B cell (primary cell): ENCODE measurements at regions of chr1 and their contacts with region 1.

Region 1: GRCh38 chr1:2575801-2576663 is 10.5 kb upstream of the PRXL2B start:
- DNase-seq: peak; percentile 66
- ATAC-seq: no peak
- H3K4me3 ChIP-seq: peak overlapping the region in 2 of 5 experiments; percentile 46 to 59
- H3K4me3 Mint-ChIP-seq: peak overlapping the region; percentile 83
- H3K27ac ChIP-seq: peak overlapping the region; percentile 21 to 100
- H3K27ac Mint-ChIP-seq: peak overlapping the region; percentile 98
- H3K4me1 ChIP-seq: peaks cover 46 to 59% of the 10 kb centered on the region in 2 donors
- H3K4me1 Mint-ChIP-seq: peaks cover 61% of the 10 kb centered on the region
- H3K27me3 ChIP-seq: no peaks in the 10 kb centered on the region
- H3K27me3 Mint-ChIP-seq: no peaks in the 10 kb centered on the region
- CTCF ChIP-seq: no peak

Region 2: GRCh38 chr1:2259668-2260402 is 316.2 kb before region 1 on chr1:
- CTCF ChIA-PET with region 1: no interaction called
- POLR2A ChIA-PET with region 1: no interaction called
- intact Hi-C with region 1: no loop called
- DNase-seq: no peak
- ATAC-seq: no peak
- H3K4me3 ChIP-seq: no peak overlapping the region
- H3K4me3 Mint-ChIP-seq: peak overlapping the region; percentile 69
- H3K27ac ChIP-seq: peak overlapping the region in 1 of 2 donors; percentile 83
- H3K27ac Mint-ChIP-seq: peak overlapping the region; percentile 75
- H3K4me1 ChIP-seq: peaks cover 54 to 66% of the 10 kb centered on the region in 2 donors
- H3K4me1 Mint-ChIP-seq: peaks cover 52% of the 10 kb centered on the region
- H3K27me3 ChIP-seq: no peaks in the 10 kb centered on the region
- H3K27me3 Mint-ChIP-seq: no peaks in the 10 kb centered on the region
- CTCF ChIP-seq: no peak

Region 3: DNA sequence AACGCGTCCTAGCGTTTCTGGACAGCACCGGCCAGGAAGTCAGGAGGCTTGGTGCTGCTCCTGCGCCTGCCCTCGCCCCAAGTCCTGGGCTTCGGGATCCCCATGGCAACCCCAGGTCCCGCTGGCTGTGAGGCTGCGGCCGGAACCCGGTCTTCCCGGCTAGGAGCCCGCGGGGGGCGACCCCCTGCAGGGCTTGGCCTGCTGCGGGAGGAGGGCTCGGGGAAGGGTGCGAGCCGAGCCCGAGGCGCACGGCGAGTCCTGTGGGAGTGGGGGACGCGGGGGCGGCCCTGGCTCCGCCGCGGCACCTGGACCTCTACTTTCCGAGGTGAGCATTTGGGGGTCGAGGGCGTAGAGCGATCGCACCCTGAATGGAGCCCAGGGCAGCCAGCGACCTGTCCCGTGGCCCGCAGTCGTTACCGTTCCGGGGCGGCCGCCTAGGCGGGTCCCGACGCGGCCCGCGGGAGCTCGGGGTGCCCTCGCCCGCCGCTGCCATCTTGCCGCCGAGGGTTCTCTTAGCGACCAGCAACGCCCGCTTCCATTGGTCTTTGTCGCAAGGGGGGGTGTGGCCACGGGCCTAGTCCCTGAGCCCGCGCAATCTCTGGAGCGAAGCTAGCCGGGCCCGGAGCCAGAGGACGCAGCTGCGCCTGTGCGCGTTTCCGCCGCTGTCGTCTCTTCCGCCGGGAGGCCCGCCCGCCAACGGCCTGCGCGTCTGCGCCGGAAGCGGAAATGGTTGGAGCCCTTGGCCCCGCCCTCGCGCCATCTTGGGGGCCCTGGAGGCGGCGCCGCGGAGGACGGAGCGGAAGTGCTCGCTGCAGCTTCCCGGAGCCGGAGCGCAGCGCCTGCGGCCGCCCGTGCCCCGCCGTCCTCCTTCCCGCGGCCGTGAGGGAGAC is 184.7 kb before region 1 on chr1 and contains the starts of genes MORN1 and RER1:
- CTCF ChIA-PET with region 1: no interaction called
- POLR2A ChIA-PET with region 1: no interaction called
- intact Hi-C with region 1: loop called (anchors 1 kb)
- DNase-seq: peak; percentile 99
- ATAC-seq: peak; percentile 94
- H3K4me3 ChIP-seq: peak within 1 kb of the TSS; percentile 61 to 92 (median 76)
- H3K4me3 Mint-ChIP-seq: peak within 1 kb of the TSS; percentile 92
- H3K27ac ChIP-seq: peak within 1 kb of the TSS; percentile 24 to 88
- H3K27ac Mint-ChIP-seq: peak within 1 kb of the TSS; percentile 88
- H3K4me1 ChIP-seq: peaks cover 25 to 47% of the 10 kb centered on the region in 2 donors
- H3K4me1 Mint-ChIP-seq: peaks cover 47% of the 10 kb centered on the region
- H3K27me3 ChIP-seq: no peaks in the 10 kb centered on the region
- H3K27me3 Mint-ChIP-seq: no peaks in the 10 kb centered on the region
- CTCF ChIP-seq: no peak
- total RNA-seq, gene MORN1: 30.4 and 32.6 TPM in 2 replicates
- total RNA-seq, gene RER1: 117 and 118 TPM in 2 replicates

Region 4: DNA sequence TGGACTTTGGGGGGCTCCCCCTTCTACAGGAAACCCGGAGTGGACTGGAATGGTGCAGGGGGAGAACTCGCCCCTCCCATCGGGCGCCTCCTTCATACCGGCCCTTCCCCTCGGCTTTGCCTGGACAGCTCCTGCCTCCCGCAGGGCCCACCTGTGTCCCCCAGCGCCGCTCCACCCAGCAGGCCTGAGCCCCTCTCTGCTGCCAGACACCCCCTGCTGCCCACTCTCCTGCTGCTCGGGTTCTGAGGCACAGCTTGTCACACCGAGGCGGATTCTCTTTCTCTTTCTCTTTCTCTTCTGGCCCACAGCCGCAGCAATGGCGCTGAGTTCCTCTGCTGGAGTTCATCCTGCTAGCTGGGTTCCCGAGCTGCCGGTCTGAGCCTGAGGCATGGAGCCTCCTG is 19.8 kb before region 1 on chr1 and contains the start of gene TNFRSF14:
- CTCF ChIA-PET with region 1: interaction called, 33 read pairs
- POLR2A ChIA-PET with region 1: interaction called, 33 read pairs
- intact Hi-C with region 1: loop called (anchors 1 kb)
- DNase-seq: peak; percentile 88
- ATAC-seq: peak; percentile 61
- H3K4me3 ChIP-seq: peak within 1 kb of the TSS; percentile 82 to 91 (median 85)
- H3K4me3 Mint-ChIP-seq: peak within 1 kb of the TSS; percentile 95
- H3K27ac ChIP-seq: peak within 1 kb of the TSS; percentile 87 to 99
- H3K27ac Mint-ChIP-seq: peak within 1 kb of the TSS; percentile 97
- H3K4me1 ChIP-seq: peaks cover 31 to 43% of the 10 kb centered on the region in 2 donors
- H3K4me1 Mint-ChIP-seq: peaks cover 48% of the 10 kb centered on the region
- H3K27me3 ChIP-seq: no peaks in the 10 kb centered on the region
- H3K27me3 Mint-ChIP-seq: no peaks in the 10 kb centered on the region
- CTCF ChIP-seq: peak; percentile 36
- total RNA-seq, gene TNFRSF14: 239 and 243 TPM in 2 replicates

Region 5: DNA sequence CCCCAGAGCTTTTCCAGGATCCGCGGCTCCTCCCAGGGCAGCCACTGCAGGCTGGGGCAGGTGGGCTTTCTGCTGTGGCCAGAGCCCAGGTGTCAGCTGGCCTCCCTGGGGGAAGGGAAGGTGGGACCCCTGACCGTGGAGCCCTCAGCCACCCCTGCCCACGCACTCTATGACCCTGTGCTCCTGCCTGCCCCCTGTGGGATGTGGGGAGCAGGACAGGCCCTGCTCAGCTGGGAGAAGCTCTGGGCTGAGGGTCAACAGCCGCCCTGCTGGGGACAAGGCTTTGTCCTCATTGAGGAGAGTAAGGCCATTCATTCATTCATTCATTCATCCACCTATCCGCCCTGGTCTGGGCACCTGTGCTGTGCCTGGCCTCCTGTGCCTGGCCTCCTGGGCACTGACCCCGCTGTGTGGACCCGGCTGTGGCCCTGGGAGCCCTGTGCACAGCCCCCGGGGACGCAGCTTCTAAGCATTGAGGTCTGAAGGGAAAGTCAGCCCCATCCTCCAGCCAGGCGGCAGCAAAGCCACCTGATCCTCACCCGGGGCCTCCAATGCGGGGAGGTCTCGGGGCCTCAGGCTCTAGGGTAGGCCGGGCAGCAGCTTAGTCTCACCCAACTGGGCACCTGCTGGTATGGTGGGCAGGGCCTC is 14.0 kb before region 1 on chr1:
- CTCF ChIA-PET with region 1: interaction called, 33 read pairs
- POLR2A ChIA-PET with region 1: interaction called, 33 read pairs
- intact Hi-C with region 1: no loop called
- DNase-seq: peak; percentile 54
- ATAC-seq: peak; percentile 63
- H3K4me3 ChIP-seq: no peak overlapping the region
- H3K4me3 Mint-ChIP-seq: no peak overlapping the region
- H3K27ac ChIP-seq: no peak overlapping the region
- H3K27ac Mint-ChIP-seq: no peak overlapping the region
- H3K4me1 ChIP-seq: peaks cover 15 to 21% of the 10 kb centered on the region in 2 donors
- H3K4me1 Mint-ChIP-seq: peaks cover 20% of the 10 kb centered on the region
- H3K27me3 ChIP-seq: no peaks in the 10 kb centered on the region
- H3K27me3 Mint-ChIP-seq: no peaks in the 10 kb centered on the region
- CTCF ChIP-seq: peak; percentile 64